ENCODE measurements at regions of chr10 and their contacts with region 1.

Region 1: DNA sequence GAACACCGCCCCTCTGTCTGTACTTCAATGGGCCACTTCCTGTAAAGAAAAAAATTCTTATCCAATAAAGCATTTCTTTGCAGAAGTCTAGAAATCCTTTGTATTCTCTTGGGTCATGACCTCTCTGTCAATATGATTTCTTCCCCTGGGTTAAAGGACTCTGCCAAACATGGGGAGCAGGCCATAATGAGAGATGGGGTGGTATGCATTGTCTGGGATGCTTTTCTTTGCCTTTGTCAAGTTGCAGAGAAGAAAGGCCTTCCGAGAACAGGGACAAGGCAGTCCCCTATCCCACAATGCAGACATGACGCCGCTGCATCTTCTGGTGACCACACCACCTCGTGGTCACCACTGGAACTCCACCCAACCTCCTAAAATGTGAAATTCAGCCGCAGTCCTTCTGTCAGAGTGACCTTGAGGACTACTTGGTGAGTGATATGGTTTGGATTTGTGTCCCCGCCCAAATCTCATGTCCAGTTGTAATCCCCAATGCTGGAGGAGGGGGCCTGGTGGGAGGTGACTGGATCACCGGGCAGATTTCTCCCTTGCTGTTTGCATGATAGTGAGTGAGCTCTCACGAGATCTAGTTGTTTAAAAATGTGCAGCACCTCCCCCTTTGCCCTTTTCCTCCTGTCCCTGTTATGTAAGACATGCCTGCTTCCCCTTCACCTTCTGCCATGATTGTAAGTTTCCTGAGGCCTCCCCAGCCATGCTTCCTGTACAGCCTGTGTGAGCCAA is 15.2 kb upstream of the FRMPD2 start:
- DNase-seq: peak; percentile 54
- ATAC-seq: peak; percentile 87
- H3K4me3 ChIP-seq: no peak overlapping the region
- H3K27ac ChIP-seq: no peak overlapping the region
- H3K4me1 ChIP-seq: peaks cover 25% of the 10 kb centered on the region
- H3K27me3 ChIP-seq: no peaks in the 10 kb centered on the region
- CTCF ChIP-seq: peak; percentile 80
- EP300 ChIP-seq: no peak
- POLR2A ChIP-seq: no peak
- RAD21 ChIP-seq: no peak

Region 2: DNA sequence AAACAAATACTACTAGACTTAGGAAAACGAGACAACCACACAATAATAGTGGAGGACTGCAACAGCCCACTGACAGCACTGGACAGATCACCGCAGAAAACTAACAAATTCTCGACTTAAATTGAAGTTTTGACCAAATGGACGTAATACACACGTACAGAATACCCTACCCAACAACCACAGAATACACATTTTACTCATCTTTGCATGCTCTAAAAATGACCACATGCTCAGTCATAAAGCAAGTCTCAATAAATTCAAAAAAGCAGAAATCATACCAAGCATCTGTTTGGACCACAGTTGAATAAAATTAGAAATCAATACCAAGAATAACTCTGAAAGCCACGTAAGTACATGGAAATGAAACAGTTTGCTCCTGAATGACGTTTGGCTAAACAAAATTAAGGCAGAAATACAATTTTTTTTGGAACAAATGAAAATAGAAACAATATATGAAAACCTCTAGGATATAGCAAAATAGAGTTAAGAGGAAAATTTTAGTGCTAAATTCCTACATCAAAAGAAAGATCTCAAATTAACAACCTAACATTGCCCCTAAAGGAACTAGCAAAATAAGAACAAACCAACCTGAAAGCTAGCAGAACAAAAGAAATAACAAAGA is 47.4 kb after region 1 on chr10:
- CTCF ChIA-PET with region 1: no interaction called
- POLR2A ChIA-PET with region 1: no interaction called
- in situ Hi-C with region 1: no loop called
- intact Hi-C with region 1: loop called (anchors 1 kb)
- DNase-seq: no peak
- ATAC-seq: no peak
- H3K4me3 ChIP-seq: no peak overlapping the region
- H3K27ac ChIP-seq: no peak overlapping the region
- H3K4me1 ChIP-seq: peaks cover 2% of the 10 kb centered on the region; the same call in 1 of the 2 replicates
- H3K27me3 ChIP-seq: no peaks in the 10 kb centered on the region
- CTCF ChIP-seq: no peak
- EP300 ChIP-seq: no peak
- POLR2A ChIP-seq: no peak
- RAD21 ChIP-seq: no peak

Region 3: DNA sequence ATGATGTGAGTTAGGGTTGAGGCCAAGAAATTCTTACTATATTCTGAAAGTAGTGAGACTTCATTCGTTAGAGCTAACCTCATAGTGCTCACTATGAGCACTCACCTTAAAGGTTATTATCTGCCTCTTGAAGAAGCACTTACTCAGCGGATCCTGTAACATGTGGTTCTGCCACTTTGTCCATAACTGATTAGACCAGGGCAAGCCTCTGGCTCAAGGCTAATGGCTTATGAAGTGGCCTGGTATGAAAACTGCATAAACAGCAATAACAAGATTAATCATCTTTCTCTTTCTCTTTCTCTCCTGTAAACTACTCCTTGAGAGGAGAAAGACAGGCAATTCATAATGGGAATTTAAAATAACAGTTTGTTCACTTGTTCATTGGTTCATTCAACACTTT is 99.6 kb after region 1 on chr10:
- CTCF ChIA-PET with region 1: no interaction called
- POLR2A ChIA-PET with region 1: no interaction called
- in situ Hi-C with region 1: no loop called
- intact Hi-C with region 1: no loop called
- DNase-seq: no peak
- ATAC-seq: no peak
- H3K4me3 ChIP-seq: no peak overlapping the region
- H3K27ac ChIP-seq: no peak overlapping the region
- H3K4me1 ChIP-seq: 0 out of 2 replicates have a peak, but pooled peaks cover 6% of the 10 kb centered on the region
- H3K27me3 ChIP-seq: no peaks in the 10 kb centered on the region
- CTCF ChIP-seq: no peak
- EP300 ChIP-seq: no peak
- POLR2A ChIP-seq: no peak
- RAD21 ChIP-seq: no peak